ENCODE measurements at regions of chr22 and their contacts with region 1.

Region 1: GRCh38 chr22:46367707-46368191 is 32.2 kb downstream of the TRMU start:
- DNase-seq: peak; percentile 89
- H3K4me3 Mint-ChIP-seq: no peak overlapping the region
- H3K27ac Mint-ChIP-seq: no peak overlapping the region
- H3K4me1 Mint-ChIP-seq: peaks cover 47% of the 10 kb centered on the region
- H3K27me3 Mint-ChIP-seq: no peaks in the 10 kb centered on the region
- CTCF ChIP-seq: peak; percentile 98

Region 2: GRCh38 chr22:46377566-46378425 is 10.0 kb after region 1 on chr22:
- CTCF ChIA-PET with region 1: interaction called, 37 read pairs
- intact Hi-C with region 1: no loop called
- DNase-seq: peak; percentile 94
- H3K4me3 Mint-ChIP-seq: peak overlapping the region; percentile 47
- H3K27ac Mint-ChIP-seq: peak overlapping the region; percentile 89
- H3K4me1 Mint-ChIP-seq: peaks cover 75% of the 10 kb centered on the region
- H3K27me3 Mint-ChIP-seq: no peaks in the 10 kb centered on the region
- CTCF ChIP-seq: no peak

Region 3: GRCh38 chr22:46390652-46391301 is 23.0 kb after region 1 on chr22:
- CTCF ChIA-PET with region 1: interaction called, 28 read pairs
- intact Hi-C with region 1: loop called (anchors 1 kb)
- DNase-seq: peak; percentile 73
- H3K4me3 Mint-ChIP-seq: peak overlapping the region; percentile 53
- H3K27ac Mint-ChIP-seq: peak overlapping the region; percentile 82
- H3K4me1 Mint-ChIP-seq: peaks cover 19% of the 10 kb centered on the region
- H3K27me3 Mint-ChIP-seq: no peaks in the 10 kb centered on the region
- CTCF ChIP-seq: peak; percentile 73

Region 4: GRCh38 chr22:46542011-46542985 is 174.5 kb after region 1 on chr22:
- CTCF ChIA-PET with region 1: interaction called, 27 read pairs
- intact Hi-C with region 1: loop called (anchors 5 kb)
- DNase-seq: peak; percentile 91
- H3K4me3 Mint-ChIP-seq: no peak overlapping the region
- H3K27ac Mint-ChIP-seq: no peak overlapping the region
- H3K4me1 Mint-ChIP-seq: peaks cover 32% of the 10 kb centered on the region
- H3K27me3 Mint-ChIP-seq: no peaks in the 10 kb centered on the region
- CTCF ChIP-seq: peak; percentile 97

Region 5: GRCh38 chr22:46547883-46548244 is 180.1 kb after region 1 on chr22:
- CTCF ChIA-PET with region 1: interaction called, 27 read pairs
- intact Hi-C with region 1: loop called (anchors 5 kb)
- DNase-seq: peak; percentile 63
- H3K4me3 Mint-ChIP-seq: peak overlapping the region; percentile 29
- H3K27ac Mint-ChIP-seq: peak overlapping the region; percentile 68
- H3K4me1 Mint-ChIP-seq: peaks cover 33% of the 10 kb centered on the region
- H3K27me3 Mint-ChIP-seq: no peaks in the 10 kb centered on the region
- CTCF ChIP-seq: no peak